ENCODE measurements at regions of chr2 and their contacts with region 1.

Region 1: DNA sequence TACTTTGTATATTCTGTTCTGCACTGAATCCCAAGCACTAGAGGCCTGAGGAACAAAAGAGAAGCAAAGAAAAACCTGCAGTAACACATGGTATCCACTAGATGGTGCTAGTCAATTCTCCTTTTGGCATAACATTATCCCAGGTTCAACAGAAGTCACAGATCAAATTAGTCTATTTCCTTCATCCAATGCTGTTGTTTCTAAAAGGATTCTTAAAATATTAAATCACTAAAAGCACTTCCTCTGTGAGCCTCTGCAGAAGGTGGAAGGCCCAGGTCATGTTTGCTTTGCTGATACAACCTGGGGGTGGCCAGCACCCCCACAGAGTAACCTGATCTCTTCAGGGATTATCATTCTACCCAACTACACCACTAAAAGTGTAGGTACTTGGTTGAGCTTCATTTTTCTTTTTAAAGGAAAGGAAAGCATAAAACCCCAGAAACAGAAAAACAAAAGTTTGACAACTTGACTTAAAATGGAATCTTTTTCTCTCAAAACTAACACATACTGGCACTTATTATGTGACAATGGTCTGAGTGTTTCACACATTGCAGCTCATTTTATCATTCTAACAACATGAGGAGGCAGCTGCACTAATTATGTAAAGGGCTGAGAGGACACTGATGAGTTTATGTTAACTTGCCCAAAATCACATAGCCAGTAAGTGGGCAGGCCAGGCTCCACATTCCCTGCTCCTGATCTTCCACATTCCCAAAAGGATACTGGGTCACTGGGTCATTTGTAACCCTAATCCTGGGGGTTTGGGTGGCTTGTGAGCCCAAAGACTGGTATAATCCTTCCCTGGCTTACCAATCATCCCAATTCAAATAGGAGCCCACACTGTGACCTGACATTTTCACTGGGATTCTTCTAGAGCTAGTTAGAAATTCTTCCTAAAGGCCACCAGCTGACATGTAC is 66.8 kb upstream of the DNER start:
- DNase-seq: no peak
- ATAC-seq: peak; percentile 82
- H3K4me3 ChIP-seq: no peak overlapping the region
- H3K27ac ChIP-seq: no peak overlapping the region
- H3K4me1 ChIP-seq: peaks cover 20% of the 10 kb centered on the region
- H3K27me3 ChIP-seq: no peaks in the 10 kb centered on the region
- CTCF ChIP-seq: peak; percentile 81 to 91 (median 84)
- EP300 ChIP-seq: no peak
- POLR2A ChIP-seq: no peak
- RAD21 ChIP-seq: peak; percentile 63

Region 2: DNA sequence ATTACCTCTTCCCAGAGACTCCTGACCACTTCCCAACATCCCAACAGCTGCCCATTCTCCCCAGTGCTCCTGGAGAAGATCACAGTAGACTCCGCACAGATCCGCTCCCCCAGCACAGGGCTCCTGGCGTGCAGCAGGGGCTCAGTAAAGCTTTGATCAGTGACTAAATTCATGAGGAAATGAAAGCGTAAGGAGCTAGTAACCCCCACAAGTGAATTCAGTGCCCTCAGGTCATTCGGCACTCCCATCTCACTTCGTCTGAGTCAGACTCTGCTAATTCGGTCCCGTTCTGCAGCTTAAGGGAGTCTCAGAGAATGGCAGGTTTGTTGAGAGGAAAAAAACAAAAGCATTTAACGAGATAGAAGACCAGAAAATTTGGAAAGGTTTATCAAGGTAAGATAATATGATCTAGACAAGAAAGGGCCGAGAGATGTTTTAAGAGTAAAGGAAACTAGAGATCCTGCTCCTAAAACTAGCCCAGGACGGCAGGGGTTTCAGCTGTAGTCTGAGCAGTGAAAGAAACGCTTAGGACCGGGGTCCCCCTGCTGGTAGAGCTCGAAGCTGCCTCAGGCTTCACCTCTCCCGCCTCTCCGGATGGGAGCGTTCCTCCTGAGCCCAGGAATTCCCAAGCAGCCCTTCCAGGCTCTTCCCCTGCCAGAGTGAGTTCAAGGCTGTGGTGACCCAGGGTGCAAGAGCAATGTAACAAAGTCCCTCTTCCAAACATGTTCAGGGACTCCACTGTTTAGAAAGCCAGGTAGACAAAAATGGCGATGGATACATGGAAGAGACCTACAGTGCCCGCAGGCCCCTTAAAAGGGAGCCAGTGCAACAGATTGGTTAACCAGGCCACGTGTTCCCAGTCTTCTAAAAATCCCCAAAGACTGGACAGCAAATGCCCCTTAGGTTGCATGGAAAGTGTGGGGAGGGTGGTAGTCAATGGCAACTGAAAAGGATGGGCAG is 194.1 kb before region 1 on chr2:
- CTCF ChIA-PET with region 1: no interaction called
- POLR2A ChIA-PET with region 1: no interaction called
- RAD21 ChIA-PET with region 1: no interaction called
- SMC1A ChIA-PET with region 1: no interaction called
- in situ Hi-C with region 1: no loop called
- intact Hi-C with region 1: no loop called
- DNase-seq: no peak
- ATAC-seq: peak; percentile 92
- H3K4me3 ChIP-seq: no peak overlapping the region
- H3K27ac ChIP-seq: no peak overlapping the region
- H3K4me1 ChIP-seq: no peaks in the 10 kb centered on the region
- H3K27me3 ChIP-seq: no peaks in the 10 kb centered on the region; a peak in 1 of 4 replicates
- CTCF ChIP-seq: peak; percentile 60 to 71 (median 65)
- EP300 ChIP-seq: no peak
- POLR2A ChIP-seq: no peak
- RAD21 ChIP-seq: peak; percentile 56

Region 3: GRCh38 chr2:229768235-229768634 is 12.9 kb before region 1 on chr2:
- CTCF ChIA-PET with region 1: interaction called, 10 read pairs
- POLR2A ChIA-PET with region 1: no interaction called
- RAD21 ChIA-PET with region 1: no interaction called
- SMC1A ChIA-PET with region 1: interaction called, 4 read pairs
- in situ Hi-C with region 1: no loop called
- intact Hi-C with region 1: no loop called
- DNase-seq: no peak
- ATAC-seq: no peak
- H3K4me3 ChIP-seq: no peak overlapping the region
- H3K27ac ChIP-seq: no peak overlapping the region
- H3K4me1 ChIP-seq: no peaks in the 10 kb centered on the region
- H3K27me3 ChIP-seq: no peaks in the 10 kb centered on the region
- CTCF ChIP-seq: no peak
- EP300 ChIP-seq: no peak
- POLR2A ChIP-seq: no peak
- RAD21 ChIP-seq: no peak

Region 4: GRCh38 chr2:229815858-229816257 is 34.7 kb after region 1 on chr2:
- CTCF ChIA-PET with region 1: interaction called, 23 read pairs
- POLR2A ChIA-PET with region 1: no interaction called
- RAD21 ChIA-PET with region 1: interaction called, 3 read pairs
- SMC1A ChIA-PET with region 1: interaction called, 3 read pairs
- in situ Hi-C with region 1: no loop called
- intact Hi-C with region 1: no loop called
- DNase-seq: no peak
- ATAC-seq: no peak
- H3K4me3 ChIP-seq: no peak overlapping the region
- H3K27ac ChIP-seq: no peak overlapping the region
- H3K4me1 ChIP-seq: no peaks in the 10 kb centered on the region
- H3K27me3 ChIP-seq: no peaks in the 10 kb centered on the region
- CTCF ChIP-seq: no peak
- EP300 ChIP-seq: no peak
- POLR2A ChIP-seq: no peak
- RAD21 ChIP-seq: no peak

Region 5: GRCh38 chr2:229869226-229869625 is 88.1 kb after region 1 on chr2:
- CTCF ChIA-PET with region 1: interaction called, 15 read pairs
- POLR2A ChIA-PET with region 1: interaction called, 3 read pairs
- RAD21 ChIA-PET with region 1: no interaction called
- SMC1A ChIA-PET with region 1: no interaction called
- in situ Hi-C with region 1: no loop called
- intact Hi-C with region 1: no loop called
- DNase-seq: no peak
- ATAC-seq: peak; percentile 73
- H3K4me3 ChIP-seq: no peak overlapping the region
- H3K27ac ChIP-seq: no peak overlapping the region
- H3K4me1 ChIP-seq: peaks cover 11% of the 10 kb centered on the region; the same call in 1 of the 2 replicates
- H3K27me3 ChIP-seq: no peaks in the 10 kb centered on the region
- CTCF ChIP-seq: no peak
- EP300 ChIP-seq: peak; percentile 52 to 61; a peak in 2 of 4 replicates
- POLR2A ChIP-seq: no peak
- RAD21 ChIP-seq: no peak

Region 6: DNA sequence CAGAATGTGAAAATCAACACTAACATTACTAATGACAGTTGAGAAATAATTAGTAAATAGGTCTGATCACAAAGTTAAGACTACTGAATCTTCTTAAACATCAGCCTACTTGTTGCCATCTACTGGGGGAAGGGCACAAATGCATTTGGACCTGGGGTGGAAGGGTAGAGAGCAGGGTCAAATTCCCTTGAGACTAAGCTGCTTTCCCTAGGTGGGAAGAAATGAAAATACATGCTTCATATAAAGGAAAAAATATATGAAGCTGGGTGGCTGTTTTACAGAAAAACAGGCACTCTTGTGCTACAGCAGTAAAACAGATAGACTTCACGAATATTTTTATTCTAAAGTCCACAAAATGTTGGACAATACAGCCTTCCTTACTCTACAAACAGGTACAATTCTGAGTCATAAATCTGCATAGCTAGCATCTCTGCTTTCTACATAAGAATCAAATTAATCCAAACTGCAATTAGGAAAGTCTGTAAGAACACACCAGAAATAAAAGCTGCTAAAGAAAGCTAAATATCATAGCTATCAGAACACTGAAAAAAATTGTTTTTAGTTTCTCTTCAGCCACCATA is 129.8 kb after region 1 on chr2:
- CTCF ChIA-PET with region 1: interaction called, 32 read pairs
- POLR2A ChIA-PET with region 1: no interaction called
- RAD21 ChIA-PET with region 1: interaction called, 3 read pairs
- SMC1A ChIA-PET with region 1: interaction called, 18 read pairs
- in situ Hi-C with region 1: no loop called
- intact Hi-C with region 1: no loop called
- DNase-seq: no peak
- ATAC-seq: peak; percentile 82
- H3K4me3 ChIP-seq: peak overlapping the region; percentile 2; the same call in 1 of the 2 replicates
- H3K27ac ChIP-seq: 0 out of 2 replicates have a peak overlapping the region, but pooled peaks have one; percentile 3
- H3K4me1 ChIP-seq: peaks cover 41% of the 10 kb centered on the region
- H3K27me3 ChIP-seq: no peaks in the 10 kb centered on the region
- CTCF ChIP-seq: peak; percentile 51 to 60 (median 54)
- EP300 ChIP-seq: no peak
- POLR2A ChIP-seq: no peak
- RAD21 ChIP-seq: peak; percentile 49

Region 7: DNA sequence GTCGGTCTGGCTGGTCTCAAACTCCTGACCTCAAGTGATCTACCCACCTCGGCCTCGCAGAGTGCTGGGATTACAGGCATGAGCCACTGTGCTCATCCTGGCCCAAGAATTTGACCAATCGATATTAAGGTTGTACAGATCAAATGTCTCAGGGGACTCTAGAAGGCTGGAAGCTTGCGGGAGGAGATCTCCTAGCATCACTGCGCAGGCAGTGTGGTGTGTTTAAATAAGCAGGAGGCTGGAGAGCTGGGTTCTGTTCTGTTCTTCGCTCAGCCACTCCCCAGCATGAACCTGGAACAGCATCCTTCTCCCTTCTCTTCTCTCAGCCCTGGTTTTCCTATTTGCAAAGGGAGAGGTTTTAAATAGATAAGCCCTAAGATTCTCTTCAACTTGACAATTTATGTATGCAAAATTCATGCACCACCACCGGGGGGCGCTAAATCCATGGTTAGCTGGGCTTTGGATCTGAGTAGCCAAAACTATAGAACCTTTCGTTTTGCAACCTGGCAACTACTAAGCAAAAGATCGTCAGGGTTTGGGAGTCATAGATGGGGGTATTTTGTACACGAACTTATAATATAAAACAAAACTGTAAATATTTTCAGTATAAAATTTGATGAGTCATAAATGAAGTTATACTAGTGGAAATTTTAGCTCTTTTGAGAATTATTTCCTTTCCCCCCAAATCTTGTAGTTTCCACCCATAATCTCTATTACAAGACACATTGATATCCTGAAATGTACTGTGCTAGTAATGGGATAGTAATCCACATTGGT is 227.0 kb after region 1 on chr2:
- CTCF ChIA-PET with region 1: interaction called, 9 read pairs
- POLR2A ChIA-PET with region 1: no interaction called
- RAD21 ChIA-PET with region 1: no interaction called
- SMC1A ChIA-PET with region 1: no interaction called
- in situ Hi-C with region 1: no loop called
- intact Hi-C with region 1: loop called (anchors 10 kb)
- DNase-seq: peak; percentile 26
- ATAC-seq: peak; percentile 88
- H3K4me3 ChIP-seq: no peak overlapping the region
- H3K27ac ChIP-seq: no peak overlapping the region
- H3K4me1 ChIP-seq: no peaks in the 10 kb centered on the region
- H3K27me3 ChIP-seq: no peaks in the 10 kb centered on the region
- CTCF ChIP-seq: peak; percentile 80 to 84 (median 80)
- EP300 ChIP-seq: no peak
- POLR2A ChIP-seq: no peak
- RAD21 ChIP-seq: peak; percentile 98

Region 8: GRCh38 chr2:230160112-230160660 is 379.1 kb after region 1 on chr2:
- CTCF ChIA-PET with region 1: interaction called, 3 read pairs
- POLR2A ChIA-PET with region 1: no interaction called
- RAD21 ChIA-PET with region 1: interaction called, 9 read pairs
- SMC1A ChIA-PET with region 1: interaction called, 7 read pairs
- in situ Hi-C with region 1: loop called (anchors 25 kb)
- intact Hi-C with region 1: loop called (anchors 2 kb)
- DNase-seq: peak; percentile 9
- ATAC-seq: peak; percentile 81
- H3K4me3 ChIP-seq: no peak overlapping the region
- H3K27ac ChIP-seq: no peak overlapping the region
- H3K4me1 ChIP-seq: no peaks in the 10 kb centered on the region
- H3K27me3 ChIP-seq: no peaks in the 10 kb centered on the region
- CTCF ChIP-seq: peak; percentile 63 to 70 (median 65)
- EP300 ChIP-seq: no peak
- POLR2A ChIP-seq: no peak
- RAD21 ChIP-seq: peak; percentile 86